ENCODE measurements at regions of chr2 and their contacts with region 1.

Region 1: DNA sequence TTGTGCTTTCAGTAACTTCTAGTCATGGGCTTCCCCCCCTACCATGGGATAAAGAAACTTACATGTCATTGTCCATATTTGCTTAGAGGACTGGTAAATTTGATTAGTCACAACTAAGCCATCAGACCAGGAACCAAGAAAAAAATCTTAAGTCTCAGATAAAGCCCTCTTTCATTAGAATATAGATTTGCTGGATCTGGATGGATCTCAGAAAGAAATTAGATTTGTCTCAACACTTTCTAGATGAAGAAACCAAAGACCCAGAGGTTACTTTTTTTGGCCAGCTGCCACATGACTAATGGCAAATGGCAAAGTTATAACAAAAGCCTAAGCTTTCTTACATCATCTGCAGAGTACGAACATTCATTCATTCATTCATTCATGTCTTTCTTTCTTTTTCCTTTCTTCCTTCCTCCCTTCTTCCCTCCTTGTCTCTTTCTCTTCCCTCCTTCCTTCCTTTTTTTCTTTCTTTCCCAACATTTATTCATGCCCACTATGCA is 60.2 kb downstream of the CDCA7 start:
- DNase-seq: peak in 1 of 2 donors; percentile 32
- H3K4me3 ChIP-seq: no peak overlapping the region
- H3K27ac ChIP-seq: no peak overlapping the region
- H3K4me1 ChIP-seq: no peaks in the 10 kb centered on the region
- H3K27me3 ChIP-seq: peaks cover 0 to 15% (median 0%) of the 10 kb centered on the region in 3 donors
- CTCF ChIP-seq: no peak
- EP300 ChIP-seq: no peak
- POLR2A ChIP-seq: no peak

Region 2: GRCh38 chr2:173326806-173327205 is 88.1 kb before region 1 on chr2:
- intact Hi-C with region 1: no loop called
- DNase-seq: no peak
- H3K4me3 ChIP-seq: no peak overlapping the region
- H3K27ac ChIP-seq: no peak overlapping the region
- H3K4me1 ChIP-seq: no peaks in the 10 kb centered on the region
- H3K27me3 ChIP-seq: no peaks in the 10 kb centered on the region
- CTCF ChIP-seq: no peak
- EP300 ChIP-seq: no peak
- POLR2A ChIP-seq: no peak

Region 3: GRCh38 chr2:174341286-174341994 is 926.6 kb after region 1 on chr2:
- intact Hi-C with region 1: loop called (anchors 10 kb)
- DNase-seq: peak; percentile 91 to 96
- H3K4me3 ChIP-seq: peak overlapping the region in 1 of 4 donors; percentile 37
- H3K27ac ChIP-seq: no peak overlapping the region
- H3K4me1 ChIP-seq: peaks cover 42 to 72% (median 59%) of the 10 kb centered on the region in 4 donors
- H3K27me3 ChIP-seq: peaks cover 64 to 98% (median 87%) of the 10 kb centered on the region in 3 donors
- CTCF ChIP-seq: peak in 5 of 7 experiments; percentile 82 to 96 (median 95)
- EP300 ChIP-seq: no peak
- POLR2A ChIP-seq: no peak